Naive thymus-derived CD8-positive, alpha-beta T cell (primary cell): ENCODE measurements at regions of chr16 and their contacts with region 1.

Region 1: GRCh38 chr16:57045694-57046381 is 46.5 kb upstream of the CPNE2 start:
- DNase-seq: peak in 9 of 10 donors; percentile 28 to 82 (median 42)
- ATAC-seq: peak; percentile 9 to 11
- H3K4me3 Mint-ChIP-seq: peak overlapping the region in 9 of 10 donors; percentile 11 to 65 (median 57)
- H3K27ac Mint-ChIP-seq: peak overlapping the region; percentile 79 to 100 (median 92)
- H3K4me1 Mint-ChIP-seq: peaks cover 26 to 65% (median 58%) of the 10 kb centered on the region in 4 donors
- H3K27me3 Mint-ChIP-seq: no peaks in the 10 kb centered on the region

Region 2: GRCh38 chr16:56964243-56965148 is 81.3 kb before region 1 on chr16:
- POLR2A ChIA-PET with region 1: interaction called, 40 read pairs
- DNase-seq: peak; percentile 87 to 96 (median 94)
- ATAC-seq: peak; percentile 92 to 94
- H3K4me3 Mint-ChIP-seq: peak overlapping the region in 6 of 10 donors; percentile 1 to 74 (median 50)
- H3K27ac Mint-ChIP-seq: peak overlapping the region; percentile 3 to 94 (median 86)
- H3K4me1 Mint-ChIP-seq: peaks cover 19 to 34% (median 25%) of the 10 kb centered on the region in 4 donors
- H3K27me3 Mint-ChIP-seq: no peaks in the 10 kb centered on the region

Region 3: GRCh38 chr16:57000271-57001025 is 45.4 kb before region 1 on chr16:
- POLR2A ChIA-PET with region 1: interaction called, 19 read pairs
- DNase-seq: no peak
- ATAC-seq: peak; percentile 25 to 26
- H3K4me3 Mint-ChIP-seq: peak overlapping the region; percentile 59 to 100 (median 77)
- H3K27ac Mint-ChIP-seq: peak overlapping the region; percentile 90 to 98 (median 96)
- H3K4me1 Mint-ChIP-seq: peaks cover 47 to 97% (median 95%) of the 10 kb centered on the region in 4 donors
- H3K27me3 Mint-ChIP-seq: no peaks in the 10 kb centered on the region

Region 4: DNA sequence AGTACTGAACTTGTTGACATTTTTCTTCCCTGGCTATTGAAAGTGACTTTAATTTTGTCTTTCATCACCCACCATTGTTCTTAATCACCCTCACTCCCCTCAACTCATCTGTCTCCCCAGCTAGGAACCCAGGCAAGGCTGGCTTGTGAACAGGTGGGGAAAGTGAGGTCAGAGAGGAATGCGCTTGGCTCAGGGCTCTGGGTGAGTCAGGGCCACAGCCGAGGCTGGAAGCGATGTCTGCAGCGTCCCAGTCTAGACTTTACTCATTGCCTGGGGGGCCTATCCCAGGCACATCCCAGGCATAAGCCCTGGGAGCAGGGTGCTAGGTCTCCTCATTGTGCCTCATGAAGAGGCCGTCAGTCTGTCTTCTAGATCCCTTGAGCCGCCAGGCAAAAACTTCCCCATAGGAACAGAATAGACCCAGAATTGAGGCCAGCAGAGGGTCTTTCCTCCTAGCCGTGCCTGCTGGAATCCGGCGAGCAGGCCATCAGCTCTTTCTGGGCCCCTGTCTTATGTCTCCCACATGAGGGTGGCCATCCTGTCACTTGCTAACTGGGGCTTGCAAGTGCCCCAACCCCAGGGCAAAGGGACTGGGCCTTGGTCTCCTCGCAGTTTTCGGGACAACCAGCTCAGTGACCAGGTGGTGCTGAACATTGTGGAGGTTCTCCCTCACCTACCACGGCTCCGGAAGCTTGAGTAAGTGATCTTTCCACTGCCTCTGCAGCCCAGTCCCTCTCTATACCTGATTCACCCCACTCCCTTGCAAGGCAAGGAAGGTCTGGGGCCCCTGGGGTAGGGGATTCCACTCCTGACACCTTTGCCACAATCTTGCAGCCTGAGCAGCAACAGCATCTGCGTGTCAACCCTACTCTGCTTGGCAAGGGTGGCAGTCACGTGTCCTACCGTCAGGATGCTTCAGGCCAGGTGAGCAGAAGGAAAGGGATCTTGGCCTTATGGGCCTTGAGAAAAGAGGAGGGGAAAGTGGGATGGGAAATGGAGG is 16.4 kb before region 1 on chr16:
- POLR2A ChIA-PET with region 1: interaction called, 319 read pairs
- DNase-seq: no peak
- ATAC-seq: no peak
- H3K4me3 Mint-ChIP-seq: peak overlapping the region in 2 of 10 donors; percentile 14 to 15
- H3K27ac Mint-ChIP-seq: peak overlapping the region; percentile 28 to 92 (median 80)
- H3K4me1 Mint-ChIP-seq: peaks cover 53 to 93% (median 84%) of the 10 kb centered on the region in 4 donors
- H3K27me3 Mint-ChIP-seq: no peaks in the 10 kb centered on the region